Pancreas (tissue), 10 donors: ENCODE measurements at regions of chr4 and their contacts with region 1.

Region 1: GRCh38 chr4:37452952-37453280 is 208.4 kb downstream of the NWD2 start:
- DNase-seq: peak in 4 of 6 donors; percentile 27 to 76 (median 72)
- ATAC-seq: peak; percentile 72 to 86 (median 80)
- H3K4me3 ChIP-seq: peak overlapping the region in 2 of 4 donors; percentile 57 to 64
- H3K27ac ChIP-seq: peak overlapping the region; percentile 56 to 90 (median 76)
- H3K4me1 ChIP-seq: peaks cover 7 to 27% (median 15%) of the 10 kb centered on the region in 3 donors
- H3K27me3 ChIP-seq: no peaks in the 10 kb centered on the region
- CTCF ChIP-seq: peak; percentile 34 to 47 (median 45)

Region 2: DNA sequence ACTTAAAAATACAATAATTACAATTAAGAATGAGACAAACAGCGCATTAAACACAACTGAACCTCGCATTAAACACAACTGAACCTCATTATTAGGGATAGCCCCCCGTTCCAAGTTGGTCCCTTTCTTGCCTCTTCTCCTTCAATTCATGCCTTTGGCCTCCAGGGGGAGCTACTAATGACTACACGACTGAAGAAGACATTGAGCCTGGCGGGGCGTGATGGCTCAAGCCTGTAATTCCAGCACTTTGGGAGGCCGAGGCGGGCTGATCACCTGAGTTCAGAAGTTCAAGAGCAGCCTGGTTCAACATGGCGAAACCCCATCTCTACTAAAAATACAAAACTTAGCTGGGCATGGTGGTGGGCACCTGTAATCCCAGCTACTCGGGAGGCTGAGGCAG is 264.8 kb before region 1 on chr4:
- intact Hi-C with region 1: no loop called
- DNase-seq: no peak
- ATAC-seq: no peak
- H3K4me3 ChIP-seq: no peak overlapping the region
- H3K27ac ChIP-seq: no peak overlapping the region
- H3K4me1 ChIP-seq: no peaks in the 10 kb centered on the region
- H3K27me3 ChIP-seq: no peaks in the 10 kb centered on the region
- CTCF ChIP-seq: no peak

Region 3: DNA sequence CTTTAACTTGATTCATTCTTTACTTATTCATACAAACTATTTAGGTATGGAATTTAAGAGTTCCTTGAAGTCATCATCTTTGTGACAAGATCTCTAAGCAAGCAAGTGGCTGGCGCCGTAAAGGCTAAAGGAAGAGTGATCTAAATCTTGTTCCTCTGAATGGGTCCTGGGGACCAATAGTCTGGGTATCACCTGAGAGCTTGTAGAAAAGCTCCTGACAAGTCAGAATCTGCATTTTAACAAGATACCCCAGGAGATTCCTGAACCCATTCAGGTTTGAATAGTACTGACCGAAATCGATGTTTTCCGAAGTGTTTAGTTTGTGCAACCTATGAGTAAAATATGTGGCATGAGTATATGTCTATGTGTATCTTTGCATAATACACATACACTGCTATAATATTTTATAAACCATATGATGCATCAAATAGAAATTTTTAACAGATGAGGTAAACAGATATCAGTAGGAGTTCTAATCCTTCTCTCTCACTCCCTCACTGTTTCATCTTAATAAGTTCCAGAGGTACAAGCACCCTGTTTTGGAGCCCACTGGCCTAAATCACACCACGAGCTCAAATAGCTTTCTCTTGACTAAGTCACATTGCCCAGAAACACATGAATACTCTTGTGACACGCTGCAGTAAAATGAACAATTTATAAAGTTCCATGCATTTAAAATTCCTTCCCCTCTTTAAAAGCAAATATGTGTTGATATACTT is 63.3 kb after region 1 on chr4:
- intact Hi-C with region 1: loop called in 1 of 3 experiments (anchors 10 kb)
- DNase-seq: no peak
- ATAC-seq: no peak
- H3K4me3 ChIP-seq: no peak overlapping the region
- H3K27ac ChIP-seq: no peak overlapping the region
- H3K4me1 ChIP-seq: no peaks in the 10 kb centered on the region
- H3K27me3 ChIP-seq: no peaks in the 10 kb centered on the region
- CTCF ChIP-seq: no peak

Region 4: DNA sequence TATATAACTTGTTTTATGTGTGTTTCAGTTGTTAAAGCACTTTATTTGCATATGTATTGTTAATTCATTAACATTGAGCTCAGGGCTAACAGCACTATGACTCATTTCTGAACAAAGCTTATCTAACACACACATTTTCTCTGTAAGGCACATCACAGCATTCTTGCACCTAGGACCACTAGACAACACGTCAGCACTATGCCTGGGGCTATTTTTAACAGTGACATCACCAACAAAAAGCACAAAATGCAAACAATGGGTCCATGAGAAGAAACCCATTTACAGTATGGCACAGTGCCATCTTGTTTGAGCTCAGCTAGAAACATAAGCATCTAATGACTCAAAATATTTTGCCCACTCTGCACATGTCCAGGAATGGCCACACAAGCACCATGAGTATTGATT is 108.9 kb after region 1 on chr4:
- intact Hi-C with region 1: loop called in 2 of 3 experiments (anchors 10 kb)
- DNase-seq: no peak
- ATAC-seq: peak in 1 of 4 donors; percentile 52
- H3K4me3 ChIP-seq: no peak overlapping the region
- H3K27ac ChIP-seq: no peak overlapping the region
- H3K4me1 ChIP-seq: no peaks in the 10 kb centered on the region
- H3K27me3 ChIP-seq: no peaks in the 10 kb centered on the region
- CTCF ChIP-seq: no peak

Region 5: GRCh38 chr4:37793562-37793961 is 340.6 kb after region 1 on chr4:
- intact Hi-C with region 1: loop called in 1 of 3 experiments (anchors 10 kb)
- DNase-seq: peak in 1 of 6 donors; percentile 27
- ATAC-seq: peak in 3 of 4 donors; percentile 74 to 76 (median 76)
- H3K4me3 ChIP-seq: no peak overlapping the region
- H3K27ac ChIP-seq: no peak overlapping the region
- H3K4me1 ChIP-seq: no peaks in the 10 kb centered on the region
- H3K27me3 ChIP-seq: no peaks in the 10 kb centered on the region
- CTCF ChIP-seq: peak in 1 of 4 donors; percentile 17